Activated CD4-positive, alpha-beta T cell treated with anti-CD3 and anti-CD28 coated beads, Interleukin-2, amount 10 ng/mL, durations not matched to agents 24 days and 14 days (primary cell): ENCODE measurements at regions of chr12 and their contacts with region 1.

Region 1: GRCh38 chr12:6851921-6852650 is at the start of gene USP5:
- DNase-seq: peak; percentile 99
- H3K4me3 Mint-ChIP-seq: peak within 1 kb of the TSS; percentile 89
- H3K27ac Mint-ChIP-seq: peak within 1 kb of the TSS; percentile 97
- H3K4me1 Mint-ChIP-seq: peaks cover 38% of the 10 kb centered on the region
- H3K27me3 Mint-ChIP-seq: no peaks in the 10 kb centered on the region
- total RNA-seq, gene USP5: 121 TPM in 2 replicates

Region 2: GRCh38 chr12:6154730-6155459 is 697.2 kb before region 1 on chr12:
- intact Hi-C with region 1: no loop called
- DNase-seq: no peak
- H3K4me3 Mint-ChIP-seq: no peak overlapping the region
- H3K27ac Mint-ChIP-seq: no peak overlapping the region
- H3K4me1 Mint-ChIP-seq: peaks cover 6% of the 10 kb centered on the region
- H3K27me3 Mint-ChIP-seq: peaks cover 6% of the 10 kb centered on the region

Region 3: DNA sequence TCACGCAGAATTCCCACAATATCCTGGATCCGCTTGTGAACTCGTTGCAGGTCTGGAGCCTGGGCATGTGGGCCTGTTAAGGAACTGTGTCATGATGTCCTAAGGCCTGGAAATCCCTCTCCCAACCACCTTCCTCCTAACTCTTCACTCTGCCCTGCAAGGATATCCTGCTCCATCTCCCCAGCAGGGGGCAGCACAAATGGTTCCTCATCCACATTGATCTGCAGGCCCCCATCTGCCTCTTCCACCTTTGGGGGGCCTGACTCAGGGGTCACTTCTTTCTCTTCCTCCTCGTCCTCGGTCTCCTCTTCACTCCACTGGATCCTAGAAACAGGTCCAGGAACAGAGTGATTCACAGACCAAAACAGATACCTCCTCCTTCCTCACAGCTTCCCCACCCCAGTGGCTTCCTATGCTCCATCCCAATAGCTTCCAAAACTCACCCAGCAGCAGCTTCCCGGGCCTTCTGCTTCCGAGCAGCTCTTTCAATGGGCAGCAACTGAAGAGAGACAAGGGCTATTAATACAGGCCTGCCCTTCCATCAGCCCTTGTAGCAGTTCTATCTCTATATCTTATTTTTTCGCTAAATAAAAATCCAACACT is 288.5 kb before region 1 on chr12:
- intact Hi-C with region 1: loop called (anchors 5 kb)
- DNase-seq: peak; percentile 91
- H3K4me3 Mint-ChIP-seq: no peak overlapping the region
- H3K27ac Mint-ChIP-seq: no peak overlapping the region
- H3K4me1 Mint-ChIP-seq: peaks cover 30% of the 10 kb centered on the region
- H3K27me3 Mint-ChIP-seq: no peaks in the 10 kb centered on the region

Region 4: DNA sequence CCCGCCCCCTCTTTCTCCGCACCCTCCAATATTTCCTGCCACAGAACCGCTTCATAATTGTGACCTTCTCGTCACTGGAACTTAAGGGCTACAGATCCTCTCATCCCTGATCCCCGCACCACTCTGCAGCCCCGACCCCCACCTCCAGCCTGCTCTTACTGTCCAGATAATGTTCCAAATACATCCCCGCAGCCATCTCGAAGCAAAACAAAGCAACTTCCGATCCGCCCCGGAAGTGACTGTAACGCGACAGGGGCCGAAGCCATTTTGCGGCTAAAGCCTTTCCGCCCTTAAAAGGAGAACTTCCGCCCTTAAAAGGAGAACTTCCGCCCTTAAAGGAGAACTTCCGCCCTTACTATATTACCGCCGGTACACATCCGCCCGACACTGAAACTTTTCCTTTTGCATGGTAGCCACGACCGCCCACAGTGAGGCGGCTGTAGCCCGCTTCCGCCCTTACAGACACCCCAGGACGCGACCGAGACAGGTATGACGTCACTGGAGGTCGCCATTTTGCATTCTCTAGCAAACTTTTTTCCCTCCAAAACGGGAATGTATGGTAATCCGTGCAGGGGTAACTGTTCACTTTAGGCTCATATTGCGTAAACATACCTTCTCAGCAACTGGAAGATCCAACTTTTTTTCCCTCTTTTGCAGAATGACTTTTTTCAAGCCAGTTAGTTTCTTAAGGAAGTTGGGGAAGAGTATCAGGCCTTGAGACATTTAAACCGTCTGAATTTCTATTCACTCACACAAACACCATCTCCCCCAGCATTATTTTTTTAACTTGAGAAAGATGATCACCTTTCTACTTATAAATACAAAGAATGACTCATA is 189.0 kb before region 1 on chr12 and contains the start of gene ING4:
- intact Hi-C with region 1: loop called (anchors 1 kb)
- DNase-seq: peak; percentile 99
- H3K4me3 Mint-ChIP-seq: peak within 1 kb of the TSS; percentile 98
- H3K27ac Mint-ChIP-seq: peak within 1 kb of the TSS; percentile 96
- H3K4me1 Mint-ChIP-seq: peaks cover 21% of the 10 kb centered on the region
- H3K27me3 Mint-ChIP-seq: peaks cover 2% of the 10 kb centered on the region
- total RNA-seq, gene ING4: 13.7 and 15.8 TPM in 2 replicates

Region 5: GRCh38 chr12:6723607-6724396 is 128.3 kb before region 1 on chr12 and contains the start of gene COPS7A:
- intact Hi-C with region 1: loop called (anchors 1 kb)
- DNase-seq: peak; percentile 99
- H3K4me3 Mint-ChIP-seq: peak within 1 kb of the TSS; percentile 89
- H3K27ac Mint-ChIP-seq: peak within 1 kb of the TSS; percentile 98
- H3K4me1 Mint-ChIP-seq: peaks cover 27% of the 10 kb centered on the region
- H3K27me3 Mint-ChIP-seq: peaks cover 3% of the 10 kb centered on the region
- total RNA-seq, gene COPS7A: 39.5 and 44.8 TPM in 2 replicates

Region 6: DNA sequence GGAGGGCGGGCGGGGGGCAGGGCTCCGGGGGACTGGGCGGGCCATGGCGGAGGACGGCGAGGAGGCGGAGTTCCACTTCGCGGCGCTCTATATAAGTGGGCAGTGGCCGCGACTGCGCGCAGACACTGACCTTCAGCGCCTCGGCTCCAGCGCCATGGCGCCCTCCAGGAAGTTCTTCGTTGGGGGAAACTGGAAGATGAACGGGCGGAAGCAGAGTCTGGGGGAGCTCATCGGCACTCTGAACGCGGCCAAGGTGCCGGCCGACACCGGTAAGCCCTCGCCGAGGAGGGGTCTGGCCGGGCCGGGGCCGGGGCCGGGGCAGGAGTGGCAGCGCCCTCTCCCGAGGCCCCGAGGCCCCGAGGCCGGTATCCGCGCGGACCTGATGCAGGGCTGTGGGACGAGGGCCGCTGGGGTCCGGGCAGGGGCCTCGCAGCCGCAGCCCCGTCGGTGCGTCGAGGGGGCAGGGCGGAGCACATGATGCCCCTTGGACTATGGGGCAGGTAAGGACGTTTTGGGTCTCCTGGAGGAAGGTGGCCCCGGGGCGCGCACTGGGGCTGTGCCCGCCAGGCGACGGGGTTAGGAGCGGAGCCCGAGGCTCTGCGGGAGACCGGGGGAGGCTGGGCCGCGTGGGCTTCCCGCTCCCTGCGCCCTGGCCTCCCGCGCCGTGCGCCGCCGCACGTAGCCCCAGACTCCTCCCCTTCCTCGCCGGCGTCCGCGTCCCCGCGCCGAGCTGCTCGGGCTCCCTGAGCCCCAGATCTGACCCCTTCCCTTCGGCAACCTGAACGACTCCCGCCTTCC is 15.5 kb after region 1 on chr12 and contains the start of gene TPI1:
- intact Hi-C with region 1: loop called (anchors 1 kb)
- DNase-seq: peak; percentile 94
- H3K4me3 Mint-ChIP-seq: peak within 1 kb of the TSS; percentile 89
- H3K27ac Mint-ChIP-seq: peak within 1 kb of the TSS; percentile 99
- H3K4me1 Mint-ChIP-seq: peaks cover 50% of the 10 kb centered on the region
- H3K27me3 Mint-ChIP-seq: no peaks in the 10 kb centered on the region
- total RNA-seq, gene TPI1: 1,614 and 1,630 TPM in 2 replicates

Region 7: DNA sequence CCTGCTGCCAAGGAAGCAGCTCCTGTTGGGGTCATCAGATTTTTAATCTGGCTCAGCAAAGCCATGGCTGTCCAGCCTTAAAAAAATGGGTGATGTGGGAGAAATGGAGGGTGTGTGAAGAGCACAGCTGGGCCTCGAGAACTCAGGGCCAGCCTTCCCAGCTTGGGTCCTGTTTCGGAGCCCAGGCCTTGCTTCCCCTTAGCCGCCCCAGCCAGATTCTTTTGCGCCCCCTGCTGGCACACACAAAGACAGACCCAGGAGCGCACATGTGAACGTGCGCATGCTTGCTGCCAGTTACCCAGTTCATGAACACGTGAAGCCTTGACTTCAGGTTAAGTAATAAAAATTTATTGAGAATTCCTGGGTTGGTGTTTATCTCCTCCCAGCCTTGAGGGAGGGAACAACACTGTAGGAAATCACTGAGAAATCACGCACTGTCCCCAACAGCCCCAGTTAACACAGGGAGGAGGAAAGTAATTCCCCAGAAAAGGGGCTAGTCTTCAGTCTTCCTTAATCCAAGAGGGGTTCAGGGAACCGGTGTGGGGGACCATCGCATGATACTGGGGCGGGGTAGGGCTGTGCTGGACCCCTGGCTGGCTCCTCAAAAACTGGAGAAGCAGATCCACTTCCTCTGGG is 113.1 kb after region 1 on chr12:
- intact Hi-C with region 1: loop called (anchors 1 kb)
- DNase-seq: peak; percentile 96
- H3K4me3 Mint-ChIP-seq: peak overlapping the region; percentile 28
- H3K27ac Mint-ChIP-seq: peak overlapping the region; percentile 94
- H3K4me1 Mint-ChIP-seq: peaks cover 50% of the 10 kb centered on the region
- H3K27me3 Mint-ChIP-seq: no peaks in the 10 kb centered on the region